Head of caudate nucleus (tissue), 42 donors: ENCODE measurements at regions of chr14 and their contacts with region 1.

Region 1: GRCh38 chr14:104979761-104980610 is 1.8 kb upstream of the AHNAK2 start:
- DNase-seq: peak in 4 of 42 donors; percentile 15 to 59 (median 47)

Region 2: GRCh38 chr14:105020815-105021655 is 41.0 kb after region 1 on chr14 and contains the start of gene CDCA4:
- intact Hi-C with region 1: loop called (anchors 5 kb)
- DNase-seq: peak; percentile 95 to 99 (median 98)